ENCODE measurements at regions of chr20 and their contacts with region 1.

Region 1: DNA sequence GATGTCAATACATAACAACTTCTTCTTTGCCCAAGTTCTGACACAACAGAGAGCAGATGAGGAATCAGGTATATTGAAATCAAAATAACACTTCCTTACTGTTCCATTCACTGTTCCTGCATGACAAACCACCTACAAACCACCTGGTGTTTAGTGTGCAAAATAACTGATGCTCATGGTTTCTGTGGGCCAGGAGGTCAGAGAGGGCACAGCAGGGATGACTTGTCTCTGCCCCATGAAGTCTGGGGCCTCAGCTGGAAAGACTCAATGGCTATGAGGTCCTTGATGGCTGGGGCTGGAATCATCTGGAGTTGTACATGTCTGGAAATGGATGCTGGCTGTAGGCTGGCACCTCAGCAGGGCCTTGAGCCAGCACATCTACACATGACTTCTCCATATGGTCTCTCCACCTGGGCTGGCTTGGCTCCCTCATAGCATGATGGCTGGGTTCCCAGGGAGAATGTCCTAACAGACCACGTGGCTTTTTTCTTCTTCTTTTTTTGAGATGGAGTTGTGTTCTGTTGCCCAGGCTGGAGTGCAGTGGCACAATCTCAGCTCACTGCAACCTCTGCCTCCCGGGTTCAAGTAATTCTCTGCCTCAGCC is 7.4 kb upstream of the COX4I2 start:
- DNase-seq: peak; percentile 63
- H3K4me3 Mint-ChIP-seq: no peak overlapping the region
- H3K27ac Mint-ChIP-seq: no peak overlapping the region
- H3K4me1 Mint-ChIP-seq: no peaks in the 10 kb centered on the region
- H3K27me3 Mint-ChIP-seq: no peaks in the 10 kb centered on the region
- CTCF ChIP-seq: no peak

Region 2: DNA sequence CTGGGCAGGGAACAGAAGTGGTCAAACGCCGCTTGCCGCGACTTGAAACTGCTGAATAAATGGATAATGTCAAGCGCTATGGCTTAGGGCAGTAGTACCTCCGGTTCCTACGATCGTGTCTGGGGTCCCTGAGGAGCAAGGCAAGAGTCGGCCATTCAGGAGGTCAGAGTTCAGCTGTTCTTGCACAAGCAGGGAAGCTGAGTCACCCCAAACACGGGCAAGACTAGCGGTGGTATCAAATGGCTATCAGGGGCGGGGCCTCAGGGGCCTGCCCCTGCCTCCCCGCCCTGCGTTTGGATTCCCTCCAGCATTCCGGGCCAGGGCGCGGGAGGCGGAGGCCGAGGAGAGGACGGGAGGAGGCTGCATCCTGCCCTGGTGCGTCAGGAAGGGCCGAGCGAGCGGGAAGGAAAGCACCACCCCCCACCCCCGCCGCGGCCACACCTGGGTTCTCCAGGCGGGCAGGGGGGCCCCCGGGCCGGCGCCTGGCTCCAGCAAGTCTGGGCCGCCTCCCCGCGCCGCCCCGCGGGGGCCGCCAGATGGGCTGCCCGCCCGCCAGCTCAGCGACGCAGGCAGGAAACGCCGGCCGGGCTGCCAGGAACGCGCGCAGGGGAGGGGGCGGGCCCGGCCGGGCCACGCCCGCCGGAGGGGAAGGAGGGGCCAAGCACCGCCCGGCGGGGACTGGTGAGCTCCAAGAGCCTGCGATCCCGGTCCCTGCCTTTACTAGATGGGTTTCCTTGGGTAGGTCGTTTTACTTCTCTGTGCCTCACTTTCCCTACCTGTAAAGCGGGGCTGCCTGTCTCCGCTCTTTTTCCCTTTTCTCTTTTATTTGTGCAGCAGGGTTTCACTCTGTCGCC is 57.4 kb before region 1 on chr20:
- CTCF ChIA-PET with region 1: interaction called, 11 read pairs
- POLR2A ChIA-PET with region 1: interaction called, 3 read pairs
- intact Hi-C with region 1: no loop called
- DNase-seq: peak; percentile 99
- H3K4me3 Mint-ChIP-seq: peak overlapping the region; percentile 87
- H3K27ac Mint-ChIP-seq: peak overlapping the region; percentile 96
- H3K4me1 Mint-ChIP-seq: peaks cover 27% of the 10 kb centered on the region
- H3K27me3 Mint-ChIP-seq: no peaks in the 10 kb centered on the region
- CTCF ChIP-seq: no peak

Region 3: DNA sequence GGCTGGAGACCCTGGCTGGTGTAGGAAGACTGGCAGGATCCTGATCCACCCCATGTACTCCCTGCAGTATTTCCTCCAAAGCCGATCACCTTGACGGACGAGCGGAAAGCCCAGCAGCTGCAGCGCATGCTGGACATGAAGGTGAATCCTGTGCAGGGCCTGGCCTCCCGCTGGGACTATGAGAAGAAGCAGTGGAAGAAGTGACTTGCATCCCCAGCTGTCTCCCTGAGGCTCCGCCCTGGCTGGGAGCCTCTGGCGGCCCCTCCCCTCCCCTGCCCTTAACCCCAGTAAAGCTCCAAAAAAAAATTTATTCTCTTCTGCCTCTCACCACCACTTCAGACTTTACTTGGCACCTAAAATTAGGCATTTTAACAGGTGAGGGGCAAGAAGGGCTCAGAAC is 14.4 kb after region 1 on chr20:
- CTCF ChIA-PET with region 1: interaction called, 67 read pairs
- POLR2A ChIA-PET with region 1: interaction called, 3 read pairs
- intact Hi-C with region 1: no loop called
- DNase-seq: no peak
- H3K4me3 Mint-ChIP-seq: no peak overlapping the region
- H3K27ac Mint-ChIP-seq: no peak overlapping the region
- H3K4me1 Mint-ChIP-seq: no peaks in the 10 kb centered on the region
- H3K27me3 Mint-ChIP-seq: no peaks in the 10 kb centered on the region
- CTCF ChIP-seq: no peak

Region 4: GRCh38 chr20:31674895-31675827 is 44.9 kb after region 1 on chr20:
- CTCF ChIA-PET with region 1: interaction called, 16 read pairs
- POLR2A ChIA-PET with region 1: interaction called, 3 read pairs
- intact Hi-C with region 1: no loop called
- DNase-seq: peak; percentile 83
- H3K4me3 Mint-ChIP-seq: peak overlapping the region; percentile 63
- H3K27ac Mint-ChIP-seq: peak overlapping the region; percentile 60
- H3K4me1 Mint-ChIP-seq: peaks cover 51% of the 10 kb centered on the region
- H3K27me3 Mint-ChIP-seq: no peaks in the 10 kb centered on the region
- CTCF ChIP-seq: no peak

Region 5: DNA sequence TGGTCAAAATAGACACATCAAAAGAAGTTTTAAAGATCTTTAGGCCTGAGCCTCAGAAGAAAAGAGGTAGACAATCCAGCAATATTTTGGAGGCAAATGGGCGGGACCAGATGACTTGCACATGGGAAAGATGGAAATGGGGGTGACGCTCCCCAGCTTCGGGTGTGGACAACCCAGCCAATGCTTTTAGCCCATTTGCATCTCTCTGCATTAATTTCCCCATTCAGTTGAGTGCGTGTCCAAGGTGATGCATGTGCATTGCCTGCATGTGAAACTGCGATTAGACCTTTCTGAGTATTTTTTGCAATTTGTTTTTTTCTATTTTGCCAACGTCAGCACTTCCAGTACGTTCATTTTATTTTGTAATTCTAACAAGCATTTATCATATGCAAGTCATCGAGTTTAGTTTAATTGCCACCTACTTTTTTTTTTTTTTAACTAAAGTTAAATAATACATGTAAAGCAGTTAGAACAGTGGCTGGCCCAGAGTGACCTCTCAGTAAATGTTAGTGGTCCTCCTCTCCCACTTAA is 297.4 kb after region 1 on chr20:
- CTCF ChIA-PET with region 1: no interaction called
- POLR2A ChIA-PET with region 1: no interaction called
- intact Hi-C with region 1: no loop called
- DNase-seq: no peak
- H3K4me3 Mint-ChIP-seq: no peak overlapping the region
- H3K27ac Mint-ChIP-seq: no peak overlapping the region
- H3K4me1 Mint-ChIP-seq: peaks cover 6% of the 10 kb centered on the region
- H3K27me3 Mint-ChIP-seq: peaks cover 58% of the 10 kb centered on the region
- CTCF ChIP-seq: no peak

Measured in MCF 10A (cell line).